ENCODE measurements at regions of chr1 and their contacts with region 1.

Region 1: DNA sequence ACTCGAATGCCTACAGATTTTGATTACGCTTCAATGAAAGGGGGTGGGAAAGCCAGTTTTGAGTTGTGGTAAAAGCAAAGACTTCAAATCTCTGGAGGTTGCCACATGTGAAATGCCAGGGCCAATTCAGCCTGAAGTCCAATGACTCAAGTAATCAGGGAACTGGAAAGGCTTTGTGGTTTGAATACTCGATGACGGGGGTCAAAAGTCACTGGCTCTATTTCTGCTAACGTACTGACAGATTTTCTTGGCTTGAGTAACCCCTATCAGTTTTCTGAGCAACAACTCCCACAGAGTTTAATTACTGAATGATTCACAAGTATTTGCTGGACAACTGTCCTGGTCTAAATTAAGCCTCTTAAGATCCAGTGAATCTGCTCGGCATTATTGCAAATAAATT is 152.2 kb downstream of the SIPA1L2 start:
- DNase-seq: no peak

Region 2: DNA sequence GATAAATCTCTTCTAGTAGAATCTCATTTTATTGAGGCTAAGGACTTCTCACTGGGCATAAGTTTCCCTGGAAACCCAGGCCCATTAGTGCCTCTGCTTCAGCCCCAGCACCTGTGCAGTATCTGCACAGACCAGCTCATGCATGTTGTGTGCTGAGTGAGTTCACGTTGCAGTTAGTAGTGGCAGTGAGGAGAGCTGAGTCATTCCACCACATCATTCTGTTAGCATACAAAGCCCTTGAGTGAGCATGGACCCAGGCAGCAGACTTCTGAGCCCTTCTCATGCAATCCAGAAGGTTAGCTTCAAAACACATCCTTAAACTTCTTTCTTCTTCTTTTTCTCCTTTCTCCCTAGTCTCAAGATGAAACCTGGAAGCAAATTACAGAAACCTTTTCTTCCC is 426.8 kb after region 1 on chr1:
- intact Hi-C with region 1: loop called in 1 of 2 experiments (anchors 5 kb)
- DNase-seq: no peak

Measured in posterior vena cava (tissue), 2 donors.